ENCODE measurements at regions of chrX and their contacts with region 1.

Region 1: DNA sequence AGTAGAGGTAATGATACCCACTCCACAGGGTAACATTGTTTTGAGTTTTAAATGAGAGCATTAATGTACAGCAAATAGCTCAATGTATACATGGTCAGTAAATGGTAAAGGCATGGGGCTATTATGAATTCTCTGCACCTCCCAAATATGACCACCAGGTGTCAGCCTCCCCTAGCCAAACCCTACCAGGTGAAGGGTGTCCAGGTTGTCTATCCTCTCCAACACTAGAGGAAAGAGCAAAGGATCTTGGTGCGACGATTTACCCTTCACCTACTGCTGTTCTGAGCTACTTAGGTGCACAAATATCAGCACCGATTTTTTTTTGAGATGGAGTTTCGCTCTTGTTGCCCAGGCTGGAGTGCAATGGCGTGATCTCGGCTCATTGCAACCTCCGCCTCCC is 26.5 kb upstream of the XIAP start:
- DNase-seq: peak; percentile 71
- H3K4me3 Mint-ChIP-seq: no peak overlapping the region
- H3K27ac Mint-ChIP-seq: no peak overlapping the region
- H3K4me1 Mint-ChIP-seq: peaks cover 8% of the 10 kb centered on the region
- H3K27me3 Mint-ChIP-seq: peaks cover 7% of the 10 kb centered on the region

Region 2: DNA sequence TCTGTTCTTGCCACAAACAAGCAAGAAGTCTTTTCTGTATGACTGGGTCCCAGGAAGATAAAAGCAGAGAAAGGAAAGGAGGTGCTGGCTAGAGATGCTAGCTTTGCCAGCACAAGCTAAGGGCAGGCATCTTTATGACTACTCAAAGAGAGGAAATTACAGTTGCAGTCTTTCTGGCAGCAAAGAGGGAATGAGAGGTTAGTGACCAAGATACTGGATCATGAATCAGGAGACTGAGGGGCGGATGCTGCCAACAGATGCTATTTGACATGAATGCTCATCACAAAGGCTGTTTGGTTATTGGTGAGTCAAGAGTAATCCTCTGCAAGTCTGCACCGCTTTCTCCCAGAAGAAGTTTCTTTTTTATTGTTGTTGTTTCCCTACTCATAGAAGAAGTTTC is 20.9 kb after region 1 on chrX:
- CTCF ChIA-PET with region 1: interaction called, 5 read pairs
- intact Hi-C with region 1: loop called (anchors 1 kb)
- DNase-seq: peak; percentile 13
- H3K4me3 Mint-ChIP-seq: no peak overlapping the region
- H3K27ac Mint-ChIP-seq: no peak overlapping the region
- H3K4me1 Mint-ChIP-seq: peaks cover 13% of the 10 kb centered on the region
- H3K27me3 Mint-ChIP-seq: peaks cover 2% of the 10 kb centered on the region

Region 3: GRCh38 chrX:123878252-123878721 is 44.9 kb after region 1 on chrX:
- CTCF ChIA-PET with region 1: interaction called, 4 read pairs
- intact Hi-C with region 1: loop called (anchors 1 kb)
- DNase-seq: no peak
- H3K4me3 Mint-ChIP-seq: no peak overlapping the region
- H3K27ac Mint-ChIP-seq: no peak overlapping the region
- H3K4me1 Mint-ChIP-seq: peaks cover 34% of the 10 kb centered on the region
- H3K27me3 Mint-ChIP-seq: no peaks in the 10 kb centered on the region

Region 4: DNA sequence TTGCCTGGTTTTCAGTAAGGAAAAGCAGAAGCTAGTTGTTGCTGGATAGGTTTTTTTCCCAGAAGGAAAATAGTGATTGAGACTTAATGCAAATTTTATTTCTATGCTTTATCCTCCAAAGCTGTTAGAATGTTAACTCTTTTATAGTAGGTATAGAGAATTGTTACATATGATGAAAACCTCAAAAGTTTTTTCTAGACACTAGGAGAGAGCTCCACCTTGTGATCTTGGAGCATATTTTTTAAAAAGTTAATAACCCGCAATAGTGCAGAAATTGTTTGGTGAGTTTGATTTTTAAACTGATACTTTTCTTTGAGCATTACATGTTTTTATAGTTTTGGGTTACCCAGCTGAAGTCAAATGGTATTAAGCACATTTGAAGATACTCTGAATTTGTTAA is 184.6 kb after region 1 on chrX:
- CTCF ChIA-PET with region 1: interaction called, 5 read pairs
- intact Hi-C with region 1: loop called (anchors 1 kb)
- DNase-seq: no peak
- H3K4me3 Mint-ChIP-seq: no peak overlapping the region
- H3K27ac Mint-ChIP-seq: no peak overlapping the region
- H3K4me1 Mint-ChIP-seq: peaks cover 30% of the 10 kb centered on the region
- H3K27me3 Mint-ChIP-seq: no peaks in the 10 kb centered on the region

Region 5: DNA sequence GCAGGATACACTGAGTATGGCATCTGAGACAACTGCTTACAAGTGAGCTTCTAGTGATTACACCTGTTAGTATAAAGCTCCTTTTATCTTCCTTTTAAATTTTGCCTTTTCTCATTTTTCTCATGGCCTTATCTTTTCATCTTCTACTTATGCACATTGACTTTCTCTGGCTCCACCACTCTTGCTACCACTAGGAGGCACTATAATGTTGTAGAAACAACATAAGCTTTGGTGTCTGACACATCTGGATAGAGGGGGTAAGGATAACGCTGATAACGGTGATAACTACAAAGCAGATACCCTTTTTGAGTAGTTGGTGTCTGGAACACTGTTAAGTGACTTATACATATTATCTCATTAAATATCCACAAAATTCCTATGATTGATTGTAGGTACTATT is 1298.9 kb after region 1 on chrX:
- CTCF ChIA-PET with region 1: interaction called, 3 read pairs
- intact Hi-C with region 1: loop called (anchors 5 kb)
- DNase-seq: peak; percentile 4
- H3K4me3 Mint-ChIP-seq: no peak overlapping the region
- H3K27ac Mint-ChIP-seq: no peak overlapping the region
- H3K4me1 Mint-ChIP-seq: no peaks in the 10 kb centered on the region
- H3K27me3 Mint-ChIP-seq: peaks cover 2% of the 10 kb centered on the region

Measured in activated naive CD4-positive, alpha-beta T cell treated with anti-CD3 and anti-CD28 coated beads for 36 hours (primary cell).